ENCODE measurements at regions of chr17 and their contacts with region 1.

Region 1: GRCh38 chr17:4565209-4566141 is 5.1 kb upstream of the GGT6 start:
- DNase-seq: peak; percentile 76
- H3K4me3 Mint-ChIP-seq: no peak overlapping the region
- H3K27ac Mint-ChIP-seq: no peak overlapping the region
- H3K4me1 Mint-ChIP-seq: peaks cover 31% of the 10 kb centered on the region
- H3K27me3 Mint-ChIP-seq: no peaks in the 10 kb centered on the region

Region 2: GRCh38 chr17:4366327-4367063 is 199.0 kb before region 1 on chr17 and contains the start of gene UBE2G1:
- CTCF ChIA-PET with region 1: interaction called, 3 read pairs
- intact Hi-C with region 1: loop called (anchors 5 kb)
- DNase-seq: peak; percentile 99
- H3K4me3 Mint-ChIP-seq: peak within 1 kb of the TSS; percentile 71
- H3K27ac Mint-ChIP-seq: peak within 1 kb of the TSS; percentile 81
- H3K4me1 Mint-ChIP-seq: peaks cover 31% of the 10 kb centered on the region
- H3K27me3 Mint-ChIP-seq: no peaks in the 10 kb centered on the region
- total RNA-seq, gene UBE2G1: 33.3 to 36.1 TPM

Region 3: DNA sequence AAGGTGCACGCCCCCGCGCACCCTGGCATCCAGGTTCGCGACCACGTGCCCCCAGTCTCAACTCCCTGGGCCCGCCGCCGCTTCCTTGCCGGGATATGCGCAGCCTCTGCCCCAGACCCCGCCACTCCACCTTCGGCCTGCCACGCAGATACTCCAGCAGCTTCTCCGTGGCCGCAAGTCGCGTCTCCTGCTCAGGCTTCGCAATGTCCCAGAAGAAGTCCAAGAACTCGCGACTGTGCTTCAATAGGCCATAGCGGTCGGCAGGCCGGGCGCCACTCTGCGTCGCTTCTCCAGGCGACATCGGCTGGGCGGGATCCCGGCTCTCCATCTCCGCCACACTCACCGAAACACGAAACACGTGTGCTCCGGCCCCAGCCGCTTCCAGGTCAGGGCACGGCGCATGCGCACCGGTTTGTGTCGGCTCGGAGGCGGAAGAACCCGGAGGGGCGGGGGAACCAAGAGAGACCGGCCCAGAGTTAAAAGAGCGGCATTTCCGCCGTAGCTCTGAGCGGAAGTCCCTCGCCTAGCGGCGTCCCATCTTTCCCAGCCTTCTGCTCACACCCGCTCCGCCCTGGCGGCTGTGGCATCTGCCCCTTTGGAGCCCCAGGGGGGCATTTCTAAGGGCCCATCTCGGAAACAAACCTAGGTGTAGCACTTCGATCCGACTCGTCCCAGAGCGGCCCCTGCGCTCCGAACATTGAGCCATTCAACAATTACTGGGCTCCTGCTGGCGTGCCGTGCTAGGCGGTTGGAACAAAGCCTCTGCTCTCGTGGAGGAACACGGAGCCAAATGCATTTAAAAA is 10.3 kb before region 1 on chr17 and contains the start of gene MYBBP1A:
- CTCF ChIA-PET with region 1: interaction called, 45 read pairs
- intact Hi-C with region 1: loop called (anchors 1 kb)
- DNase-seq: peak; percentile 98
- H3K4me3 Mint-ChIP-seq: peak within 1 kb of the TSS; percentile 97
- H3K27ac Mint-ChIP-seq: peak within 1 kb of the TSS; percentile 92
- H3K4me1 Mint-ChIP-seq: peaks cover 23% of the 10 kb centered on the region
- H3K27me3 Mint-ChIP-seq: no peaks in the 10 kb centered on the region
- total RNA-seq, gene MYBBP1A: 73.7 to 80.7 TPM

Region 4: GRCh38 chr17:4625181-4625617 is 59.7 kb after region 1 on chr17:
- CTCF ChIA-PET with region 1: interaction called, 101 read pairs
- intact Hi-C with region 1: loop called (anchors 1 kb)
- DNase-seq: no peak
- H3K4me3 Mint-ChIP-seq: no peak overlapping the region
- H3K27ac Mint-ChIP-seq: no peak overlapping the region
- H3K4me1 Mint-ChIP-seq: no peaks in the 10 kb centered on the region
- H3K27me3 Mint-ChIP-seq: peaks cover 4% of the 10 kb centered on the region

Region 5: DNA sequence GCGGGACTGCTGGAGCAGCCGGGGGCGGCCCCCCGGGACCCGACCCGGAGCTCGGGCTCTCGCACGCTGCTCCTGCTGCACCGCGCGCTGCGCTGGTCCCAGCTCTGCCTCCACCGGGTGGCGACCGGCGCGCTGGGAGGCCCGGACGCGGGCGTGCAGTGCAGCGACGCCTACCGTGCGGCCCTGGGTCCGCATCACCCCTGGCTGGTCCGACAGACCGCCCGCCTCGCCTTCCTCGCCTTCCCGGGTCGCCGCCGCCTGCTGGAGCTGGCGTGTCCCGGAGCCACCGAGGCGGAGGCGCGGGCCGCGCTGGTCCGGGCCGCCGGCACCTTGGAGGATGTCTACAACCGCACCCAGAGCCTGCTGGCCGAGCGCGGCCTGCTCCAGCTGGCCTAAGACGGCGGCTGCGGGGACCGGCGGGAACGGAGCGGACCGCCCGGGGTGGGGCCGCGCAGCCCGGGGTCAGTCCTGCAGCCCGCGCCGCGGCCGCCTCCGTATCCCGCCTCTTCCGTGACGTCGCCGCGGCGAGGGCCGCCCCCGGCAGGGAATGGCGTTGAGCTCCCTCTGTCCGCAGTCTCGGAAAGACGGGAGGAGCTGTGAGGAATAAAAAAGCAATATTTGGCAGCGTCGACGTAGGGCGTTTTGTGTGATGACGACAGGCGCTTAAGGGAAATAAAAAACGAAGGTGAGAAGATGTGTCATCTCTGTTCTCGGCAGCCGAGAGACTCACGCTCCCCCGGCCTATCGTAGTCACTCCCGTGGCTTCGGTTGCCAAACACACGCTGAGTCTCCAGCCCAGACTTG is 224.6 kb after region 1 on chr17:
- CTCF ChIA-PET with region 1: interaction called, 3 read pairs
- intact Hi-C with region 1: loop called (anchors 10 kb)
- DNase-seq: peak; percentile 93
- H3K4me3 Mint-ChIP-seq: peak overlapping the region; percentile 85
- H3K27ac Mint-ChIP-seq: peak overlapping the region; percentile 95
- H3K4me1 Mint-ChIP-seq: peaks cover 30% of the 10 kb centered on the region
- H3K27me3 Mint-ChIP-seq: peaks cover 38% of the 10 kb centered on the region

Region 6: DNA sequence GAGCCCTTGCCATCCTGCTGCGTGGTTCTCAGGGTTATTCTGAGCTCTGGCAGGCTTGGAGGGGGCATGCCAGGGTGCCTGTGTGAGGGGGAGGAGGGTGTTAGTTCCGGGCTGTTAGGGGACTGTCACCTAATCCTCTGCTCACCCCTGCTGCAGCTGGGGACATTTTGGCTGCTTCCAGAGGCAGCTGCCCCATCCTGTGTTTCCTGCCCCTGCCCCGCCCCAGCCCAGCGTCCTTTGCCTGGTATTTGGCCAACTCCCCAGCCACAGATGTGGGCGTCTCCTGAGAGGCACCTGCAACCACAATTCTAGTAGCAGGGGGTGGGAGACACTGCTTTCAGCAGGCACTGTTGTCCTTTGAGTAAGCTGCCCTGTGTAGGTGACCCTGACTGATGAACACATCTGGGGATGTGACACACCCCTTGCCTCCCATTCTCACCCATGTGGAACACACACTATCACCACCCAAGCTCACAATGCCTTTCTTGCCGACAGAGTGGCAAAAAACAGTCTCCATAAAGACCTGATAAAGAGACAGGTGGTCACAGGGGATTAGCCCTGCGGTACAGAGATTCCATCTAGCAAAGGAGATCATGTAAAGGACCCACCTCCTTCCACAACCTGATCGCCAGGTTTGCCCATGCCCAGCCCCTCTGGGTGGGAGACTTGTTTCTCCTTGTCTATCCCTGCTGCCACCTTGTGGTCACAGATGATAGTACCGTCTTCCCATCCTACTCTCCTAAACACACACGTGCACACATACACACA is 337.8 kb after region 1 on chr17 and contains the start of gene CHRNE:
- CTCF ChIA-PET with region 1: interaction called, 4 read pairs
- intact Hi-C with region 1: loop called (anchors 5 kb)
- DNase-seq: peak; percentile 91
- H3K4me3 Mint-ChIP-seq: peak within 1 kb of the TSS; percentile 1
- H3K27ac Mint-ChIP-seq: peak within 1 kb of the TSS; percentile 48
- H3K4me1 Mint-ChIP-seq: peaks cover 32% of the 10 kb centered on the region
- H3K27me3 Mint-ChIP-seq: no peaks in the 10 kb centered on the region
- total RNA-seq, gene CHRNE: 0.22 to 0.38 TPM

Measured in activated naive CD4-positive, alpha-beta T cell treated with anti-CD3 and anti-CD28 coated beads for 36 hours (primary cell).